Calu3 (cell line): ENCODE measurements at regions of chrX and their contacts with region 1.

Region 1: DNA sequence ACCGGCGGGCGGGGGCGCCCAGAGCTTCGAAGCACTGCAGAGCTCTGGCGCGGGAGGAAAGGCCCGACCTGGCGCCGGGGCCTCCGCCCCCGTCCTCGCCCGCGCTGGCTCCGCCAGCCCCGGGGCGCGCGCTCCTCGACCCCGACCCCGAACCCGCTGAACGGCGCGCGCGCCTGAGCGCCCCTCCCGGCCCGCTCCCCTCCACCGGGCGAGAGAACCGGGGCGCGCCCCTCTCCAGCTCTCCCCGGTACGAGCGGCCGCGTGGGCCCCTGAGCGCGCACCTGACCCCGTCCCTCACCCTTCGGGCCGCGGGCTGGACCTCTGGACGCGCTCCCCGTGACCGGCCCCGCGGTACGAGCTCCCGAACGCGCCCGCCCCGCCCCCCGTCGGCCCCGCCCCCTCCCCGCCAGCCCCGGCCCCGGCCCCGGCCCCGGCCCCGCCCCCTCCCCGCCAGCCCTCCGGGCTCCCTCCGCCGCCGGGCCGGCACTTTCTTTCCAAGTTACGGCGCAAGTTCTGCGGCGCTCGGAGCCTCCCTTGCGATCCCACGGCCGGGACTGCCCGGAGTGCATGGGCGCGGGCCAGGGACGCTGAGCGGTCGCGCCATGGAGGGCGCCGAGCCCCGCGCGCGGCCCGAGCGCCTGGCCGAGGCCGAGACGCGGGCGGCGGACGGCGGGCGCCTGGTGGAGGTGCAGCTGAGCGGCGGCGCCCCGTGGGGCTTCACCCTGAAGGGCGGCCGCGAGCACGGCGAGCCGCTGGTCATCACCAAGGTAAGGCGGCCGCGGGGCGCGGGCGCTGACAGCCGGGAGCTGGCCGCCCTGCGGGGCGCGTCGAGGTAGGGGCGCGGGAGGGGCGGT is at the start of gene SHROOM2:
- DNase-seq: peak; percentile 50
- H3K4me3 Mint-ChIP-seq: peak within 1 kb of the TSS; percentile 70
- H3K27ac Mint-ChIP-seq: no peak within 1 kb of the TSS
- H3K4me1 Mint-ChIP-seq: peaks cover 22% of the 10 kb centered on the region
- H3K27me3 Mint-ChIP-seq: no peaks in the 10 kb centered on the region
- CTCF ChIP-seq: no peak
- total RNA-seq, gene SHROOM2: 14.1 and 15.3 TPM in 2 replicates

Region 2: GRCh38 chrX:9396930-9397329 is 389.2 kb before region 1 on chrX:
- CTCF ChIA-PET with region 1: no interaction called
- intact Hi-C with region 1: no loop called
- DNase-seq: peak; percentile 25
- H3K4me3 Mint-ChIP-seq: no peak overlapping the region
- H3K27ac Mint-ChIP-seq: peak overlapping the region; percentile 60
- H3K4me1 Mint-ChIP-seq: peaks cover 10% of the 10 kb centered on the region
- H3K27me3 Mint-ChIP-seq: no peaks in the 10 kb centered on the region
- CTCF ChIP-seq: no peak

Region 3: DNA sequence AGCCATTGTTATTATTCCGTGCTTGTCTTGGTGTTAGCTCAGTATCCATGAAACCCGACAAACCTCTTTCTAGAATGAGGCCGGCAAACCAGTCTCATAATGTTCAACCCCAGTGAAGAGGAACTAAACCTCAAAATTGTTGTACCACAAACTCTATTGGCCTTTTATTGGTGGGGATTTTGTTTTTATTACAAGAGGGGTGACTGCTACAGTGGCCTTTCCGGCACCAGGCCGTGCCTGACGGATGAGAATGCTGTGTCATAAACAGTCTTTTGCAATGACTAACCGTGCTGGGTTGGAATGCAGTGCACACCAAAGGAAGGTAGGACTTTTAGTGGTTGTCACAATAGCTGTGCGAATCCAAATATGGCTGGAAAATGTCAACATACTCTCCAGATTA is 60.9 kb after region 1 on chrX:
- CTCF ChIA-PET with region 1: interaction called, 4 read pairs
- intact Hi-C with region 1: loop called (anchors 10 kb)
- DNase-seq: peak; percentile 49
- H3K4me3 Mint-ChIP-seq: peak overlapping the region; percentile 33
- H3K27ac Mint-ChIP-seq: peak overlapping the region; percentile 53
- H3K4me1 Mint-ChIP-seq: peaks cover 20% of the 10 kb centered on the region
- H3K27me3 Mint-ChIP-seq: no peaks in the 10 kb centered on the region
- CTCF ChIP-seq: no peak

Region 4: DNA sequence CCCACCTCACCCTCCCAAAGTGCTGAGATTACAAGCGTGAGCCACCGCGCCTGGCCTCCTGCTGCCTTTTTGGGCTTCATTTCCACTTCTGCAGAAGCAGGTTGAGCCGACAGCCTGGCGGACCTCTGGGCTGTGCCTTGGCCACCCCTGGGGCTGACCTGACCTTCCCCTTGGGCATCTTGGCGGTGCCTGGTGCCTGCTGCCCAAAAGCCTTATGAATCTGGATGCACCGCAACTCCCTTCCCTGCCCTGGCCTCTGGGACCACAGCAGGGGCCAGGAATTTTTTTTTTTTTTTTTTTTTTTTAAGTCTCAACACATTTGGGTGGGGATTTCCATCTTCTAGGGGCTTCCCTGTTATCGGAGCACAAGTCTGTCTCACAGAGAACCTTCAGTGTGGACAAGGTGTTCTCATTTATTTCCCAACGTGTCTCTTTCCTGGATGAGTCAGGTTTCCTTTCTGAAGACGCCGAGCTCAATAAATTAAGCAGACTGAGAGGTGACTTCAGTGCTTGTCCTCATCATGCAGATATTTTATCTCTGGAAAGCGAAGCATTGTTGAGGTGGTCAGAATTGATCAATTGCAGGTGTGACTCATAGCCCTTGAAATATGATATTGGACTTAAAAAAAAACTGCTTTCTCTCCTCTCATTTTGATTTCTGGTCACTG is 79.8 kb after region 1 on chrX:
- CTCF ChIA-PET with region 1: no interaction called
- intact Hi-C with region 1: loop called (anchors 5 kb)
- DNase-seq: peak; percentile 31
- H3K4me3 Mint-ChIP-seq: peak overlapping the region; percentile 46
- H3K27ac Mint-ChIP-seq: peak overlapping the region; percentile 90
- H3K4me1 Mint-ChIP-seq: peaks cover 19% of the 10 kb centered on the region
- H3K27me3 Mint-ChIP-seq: no peaks in the 10 kb centered on the region
- CTCF ChIP-seq: no peak